Mucosa of descending colon (tissue), 3 donors: ENCODE measurements at regions of chr17 and their contacts with region 1.

Region 1: GRCh38 chr17:30021708-30022317 is 80.4 kb downstream of the EFCAB5 start:
- DNase-seq: peak in 1 of 3 donors; percentile 67
- ATAC-seq: peak; percentile 70
- H3K4me3 ChIP-seq: no peak overlapping the region
- H3K4me1 ChIP-seq: no peaks in the 10 kb centered on the region
- CTCF ChIP-seq: peak; percentile 64

Region 2: DNA sequence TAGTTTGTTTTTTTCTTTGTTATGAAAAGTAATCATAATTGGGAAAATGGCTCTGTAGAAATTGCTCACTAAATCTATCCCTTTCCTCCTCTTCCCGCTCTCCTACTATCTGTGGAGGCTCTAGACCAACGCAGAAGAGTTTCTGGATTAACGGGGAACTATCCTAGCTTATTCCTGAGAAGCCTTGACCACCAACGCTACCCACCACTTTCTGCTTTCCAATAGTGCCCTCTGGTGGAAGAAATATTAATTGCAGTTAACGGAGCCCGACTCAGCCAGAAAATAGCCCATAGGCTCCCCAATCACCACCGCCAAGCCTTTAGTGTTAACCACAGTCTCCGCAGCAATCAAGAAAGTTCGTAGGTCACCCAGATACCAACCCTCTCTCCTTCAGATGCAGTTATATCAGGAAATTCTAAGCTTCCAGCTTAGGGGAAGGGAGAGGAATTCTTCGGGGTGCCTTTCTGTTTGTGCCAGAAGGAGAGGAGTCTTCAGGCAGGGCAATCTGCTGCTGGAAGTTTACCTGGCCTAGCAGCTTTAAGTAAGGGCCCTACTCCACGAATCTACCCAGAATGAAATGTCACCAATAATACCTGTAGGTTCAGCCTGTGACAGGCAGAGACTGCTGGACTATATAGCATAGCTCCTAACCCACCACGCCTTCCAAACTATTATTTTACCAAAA is 71.8 kb after region 1 on chr17:
- intact Hi-C with region 1: loop called in 1 of 2 experiments (anchors 1 kb)
- DNase-seq: peak in 1 of 3 donors; percentile 67
- ATAC-seq: peak; percentile 79
- H3K4me3 ChIP-seq: no peak overlapping the region
- H3K4me1 ChIP-seq: no peaks in the 10 kb centered on the region
- CTCF ChIP-seq: peak; percentile 47